ENCODE measurements at regions of chr11 and their contacts with region 1.

Region 1: GRCh38 chr11:47932544-47932943 is 47.8 kb upstream of the PTPRJ start:
- H3K4me3 ChIP-seq: no peak overlapping the region
- H3K27ac ChIP-seq: no peak overlapping the region
- H3K4me1 ChIP-seq: no peaks in the 10 kb centered on the region
- CTCF ChIP-seq: no peak

Region 2: GRCh38 chr11:48097041-48097476 is 164.5 kb after region 1 on chr11:
- CTCF ChIA-PET with region 1: interaction called, 14 read pairs
- POLR2A ChIA-PET with region 1: no interaction called
- H3K4me3 ChIP-seq: no peak overlapping the region
- H3K27ac ChIP-seq: no peak overlapping the region
- H3K4me1 ChIP-seq: peaks cover 11% of the 10 kb centered on the region; the same call in 1 of the 2 replicates
- CTCF ChIP-seq: no peak

Region 3: DNA sequence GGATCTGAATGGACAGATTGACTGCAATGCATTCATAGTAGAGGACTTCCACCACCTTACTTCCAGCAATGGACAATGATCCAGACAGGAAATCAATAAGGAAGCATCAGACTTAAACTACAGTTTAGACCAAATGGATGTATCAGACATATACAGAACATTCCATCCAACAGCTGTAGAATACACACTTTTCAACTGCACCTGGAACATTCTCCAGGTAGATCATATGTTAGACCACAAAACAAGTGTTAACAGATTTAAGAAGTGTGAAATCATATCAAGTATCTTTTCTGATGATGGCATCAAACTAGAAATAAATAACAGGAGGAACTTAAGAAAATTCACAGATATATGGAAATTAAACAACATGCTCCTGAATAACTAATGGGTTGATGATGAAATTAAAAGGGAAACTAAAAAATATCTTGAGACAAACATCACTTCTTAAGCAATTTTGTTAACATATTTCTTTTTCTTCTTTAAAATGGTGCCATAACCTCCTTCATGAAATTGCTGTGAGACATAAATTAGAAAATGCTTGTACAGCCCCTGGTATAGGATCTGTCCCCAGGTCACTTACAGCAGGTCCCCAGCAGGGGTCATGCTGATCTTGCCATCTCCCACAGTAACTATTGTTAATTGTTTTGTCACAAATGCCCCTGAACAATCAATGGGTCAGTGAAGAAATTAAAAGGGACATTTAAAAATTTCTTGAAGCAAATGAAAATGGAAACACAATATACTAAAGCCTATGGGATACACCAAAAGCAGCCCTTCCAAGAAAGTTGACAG is 184.1 kb after region 1 on chr11:
- CTCF ChIA-PET with region 1: interaction called, 30 read pairs
- POLR2A ChIA-PET with region 1: interaction called, 10 read pairs
- H3K4me3 ChIP-seq: no peak overlapping the region
- H3K27ac ChIP-seq: no peak overlapping the region
- H3K4me1 ChIP-seq: no peaks in the 10 kb centered on the region
- CTCF ChIP-seq: no peak

Measured in HEK293 (cell line).